GM23248 (cell line): ENCODE measurements at regions of chr21 and their contacts with region 1.

Region 1: DNA sequence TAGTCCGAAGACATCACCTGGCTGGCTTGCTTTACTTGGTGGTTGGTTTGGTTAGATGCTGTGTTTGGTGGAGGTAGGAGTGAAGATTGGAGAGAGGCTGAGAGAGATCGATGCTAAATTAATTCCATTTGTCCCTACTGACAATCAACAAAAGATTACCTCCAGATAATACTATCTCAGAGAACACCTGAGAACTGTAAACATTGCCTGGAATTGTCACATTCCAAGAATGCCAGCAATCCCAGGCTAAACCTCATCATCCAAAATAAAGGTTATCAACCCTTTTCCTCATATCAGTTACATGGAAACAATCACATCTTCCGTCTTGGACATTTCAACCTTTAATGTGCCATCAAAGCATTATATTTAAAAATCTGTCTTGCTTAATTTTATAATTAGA is 141.0 kb downstream of the GRIK1 start:
- DNase-seq: no peak
- H3K4me3 ChIP-seq: no peak overlapping the region
- H3K27ac ChIP-seq: no peak overlapping the region
- H3K4me1 ChIP-seq: no peaks in the 10 kb centered on the region
- H3K27me3 ChIP-seq: no peaks in the 10 kb centered on the region

Region 2: DNA sequence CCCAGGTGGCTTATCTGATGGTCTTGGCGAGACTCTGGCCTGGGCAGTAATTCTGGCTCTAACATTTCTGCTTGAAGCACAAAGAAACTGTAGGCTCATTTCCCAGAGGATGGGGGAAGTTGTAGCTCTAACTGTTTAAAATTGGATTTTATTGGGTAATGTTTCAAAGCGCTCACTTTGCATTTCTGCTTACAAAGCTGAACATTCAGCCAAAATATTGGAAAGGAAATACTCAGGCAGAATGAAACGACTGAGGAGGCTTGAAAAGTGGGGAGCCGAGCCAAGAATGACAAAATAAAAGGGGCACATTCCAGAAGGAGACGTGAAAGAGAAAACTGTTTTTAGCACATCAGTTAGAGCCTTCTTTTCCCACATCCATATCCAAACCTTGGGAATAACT is 61.7 kb before region 1 on chr21:
- in situ Hi-C with region 1: loop called (anchors 10 kb)
- DNase-seq: no peak
- H3K4me3 ChIP-seq: no peak overlapping the region
- H3K27ac ChIP-seq: no peak overlapping the region
- H3K4me1 ChIP-seq: no peaks in the 10 kb centered on the region
- H3K27me3 ChIP-seq: no peaks in the 10 kb centered on the region; the same call in none of the 2 replicates